ENCODE measurements at regions of chr19 and their contacts with region 1.

Region 1: GRCh38 chr19:3544742-3545668 is 6.0 kb downstream of the TEKTIP1 start:
- DNase-seq: peak; percentile 47
- H3K4me3 ChIP-seq: no peak overlapping the region
- H3K27ac ChIP-seq: no peak overlapping the region
- H3K4me1 ChIP-seq: no peaks in the 10 kb centered on the region
- H3K27me3 ChIP-seq: no peaks in the 10 kb centered on the region
- CTCF ChIP-seq: peak; percentile 90 to 99
- POLR2A ChIP-seq: no peak

Region 2: GRCh38 chr19:3108775-3109174 is 436.2 kb before region 1 on chr19:
- CTCF ChIA-PET with region 1: no interaction called
- POLR2A ChIA-PET with region 1: no interaction called
- dilution Hi-C with region 1: no loop called
- intact Hi-C with region 1: no loop called
- DNase-seq: peak; percentile 62
- H3K4me3 ChIP-seq: no peak overlapping the region
- H3K27ac ChIP-seq: no peak overlapping the region
- H3K4me1 ChIP-seq: no peaks in the 10 kb centered on the region
- H3K27me3 ChIP-seq: no peaks in the 10 kb centered on the region
- CTCF ChIP-seq: peak; percentile 85 to 93
- POLR2A ChIP-seq: no peak

Region 3: DNA sequence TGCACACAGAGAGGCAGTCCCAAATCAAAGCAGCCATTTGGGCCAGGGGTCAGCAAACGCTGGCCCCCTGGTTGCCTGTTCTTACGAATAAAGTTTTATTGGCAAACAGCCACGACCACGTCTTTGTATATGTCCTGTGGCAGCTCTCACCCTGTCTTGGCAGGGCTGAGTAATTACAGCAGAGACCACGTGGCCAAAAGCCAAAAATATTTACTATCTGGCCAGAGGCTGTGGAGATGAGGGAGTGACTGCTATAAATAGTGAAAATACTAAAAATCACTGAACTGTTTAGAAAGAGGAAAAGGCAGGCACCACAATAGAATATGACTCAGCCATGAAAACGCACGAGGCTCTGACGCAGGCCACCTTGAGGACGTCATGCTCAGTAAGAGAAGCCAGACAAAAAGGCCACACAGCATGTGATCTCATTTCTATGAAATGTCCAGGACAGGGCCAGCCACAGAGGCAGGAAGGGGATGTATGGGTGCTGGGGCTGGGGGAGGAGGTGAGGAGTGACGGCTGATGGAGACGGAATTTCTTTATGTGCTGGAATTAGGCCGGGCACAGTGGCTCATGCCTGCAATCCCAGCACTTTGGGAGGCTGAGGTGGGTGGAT is 94.1 kb before region 1 on chr19:
- CTCF ChIA-PET with region 1: no interaction called
- POLR2A ChIA-PET with region 1: no interaction called
- dilution Hi-C with region 1: no loop called
- intact Hi-C with region 1: no loop called
- DNase-seq: peak; percentile 99
- H3K4me3 ChIP-seq: no peak overlapping the region
- H3K27ac ChIP-seq: peak overlapping the region; percentile 94
- H3K4me1 ChIP-seq: peaks cover 11% of the 10 kb centered on the region
- H3K27me3 ChIP-seq: no peaks in the 10 kb centered on the region
- CTCF ChIP-seq: no peak
- POLR2A ChIP-seq: no peak

Region 4: GRCh38 chr19:3500429-3501130 is 44.4 kb before region 1 on chr19 and contains the start of gene DOHH:
- CTCF ChIA-PET with region 1: no interaction called
- POLR2A ChIA-PET with region 1: no interaction called
- dilution Hi-C with region 1: no loop called
- intact Hi-C with region 1: no loop called
- DNase-seq: peak; percentile 98
- H3K4me3 ChIP-seq: peak within 1 kb of the TSS; percentile 73 to 87 (median 80)
- H3K27ac ChIP-seq: peak within 1 kb of the TSS; percentile 87
- H3K4me1 ChIP-seq: peaks cover 9% of the 10 kb centered on the region
- H3K27me3 ChIP-seq: no peaks in the 10 kb centered on the region
- CTCF ChIP-seq: no peak
- POLR2A ChIP-seq: peak; percentile 92
- total RNA-seq, gene DOHH: 14.8 and 15.2 TPM in 2 replicates

Region 5: DNA sequence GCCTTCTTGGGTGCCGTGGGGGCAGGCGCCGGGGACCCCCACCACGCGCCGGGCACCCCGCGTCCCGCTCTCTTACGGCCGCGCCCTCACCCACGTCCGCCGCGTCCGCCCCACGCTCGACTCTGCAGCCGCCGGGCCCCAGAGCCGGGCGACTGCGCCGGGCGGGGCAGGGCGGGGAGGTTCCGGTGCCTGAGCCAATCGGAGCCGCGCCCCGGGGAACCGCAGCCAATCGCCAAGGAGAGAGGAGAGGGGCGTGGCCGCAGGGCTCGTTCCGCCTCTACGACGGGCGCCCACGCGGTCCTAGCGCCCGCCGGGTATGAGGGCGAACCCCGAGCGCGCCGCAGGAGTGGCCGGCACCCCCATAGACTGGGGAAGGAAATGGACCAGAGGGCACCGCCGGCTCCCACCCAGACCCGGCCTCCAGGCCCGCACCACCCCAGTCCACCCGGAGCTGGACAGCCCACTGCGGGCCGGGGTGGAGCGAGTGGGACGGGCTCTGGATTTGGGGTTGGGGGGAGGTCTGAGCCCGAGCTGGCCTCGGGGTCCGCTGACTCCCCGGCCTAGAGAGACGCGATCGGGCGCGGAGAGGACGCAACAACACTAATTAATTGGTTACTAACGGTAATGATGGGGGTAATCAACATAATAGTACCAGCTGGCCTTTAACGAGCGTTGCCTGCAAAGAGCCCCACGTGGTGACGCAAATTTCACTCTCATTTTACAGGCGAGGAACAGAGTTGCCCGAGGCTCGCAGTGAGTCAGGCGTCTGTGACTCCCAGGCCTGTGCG is 12.7 kb after region 1 on chr19 and contains the start of gene MFSD12:
- CTCF ChIA-PET with region 1: interaction called, 34 read pairs
- POLR2A ChIA-PET with region 1: interaction called, 5 read pairs
- dilution Hi-C with region 1: no loop called
- intact Hi-C with region 1: no loop called
- DNase-seq: peak; percentile 91
- H3K4me3 ChIP-seq: peak within 1 kb of the TSS; percentile 49 to 63 (median 58)
- H3K27ac ChIP-seq: peak within 1 kb of the TSS; percentile 21
- H3K4me1 ChIP-seq: peaks cover 24% of the 10 kb centered on the region
- H3K27me3 ChIP-seq: no peaks in the 10 kb centered on the region
- CTCF ChIP-seq: no peak
- POLR2A ChIP-seq: peak; percentile 68
- total RNA-seq, gene MFSD12: 78.9 and 80.4 TPM in 2 replicates

Region 6: GRCh38 chr19:3572132-3572854 is 27.3 kb after region 1 on chr19:
- CTCF ChIA-PET with region 1: interaction called, 27 read pairs
- POLR2A ChIA-PET with region 1: no interaction called
- dilution Hi-C with region 1: no loop called
- intact Hi-C with region 1: no loop called
- DNase-seq: peak; percentile 100
- H3K4me3 ChIP-seq: peak overlapping the region; percentile 26 to 33 (median 31)
- H3K27ac ChIP-seq: peak overlapping the region; percentile 30
- H3K4me1 ChIP-seq: peaks cover 15% of the 10 kb centered on the region
- H3K27me3 ChIP-seq: no peaks in the 10 kb centered on the region
- CTCF ChIP-seq: no peak
- POLR2A ChIP-seq: no peak

Region 7: GRCh38 chr19:3606690-3607289 is 61.8 kb after region 1 on chr19 and contains the start of gene TBXA2R:
- CTCF ChIA-PET with region 1: interaction called, 10 read pairs
- POLR2A ChIA-PET with region 1: no interaction called
- dilution Hi-C with region 1: no loop called
- intact Hi-C with region 1: no loop called
- DNase-seq: peak; percentile 69
- H3K4me3 ChIP-seq: peak within 1 kb of the TSS; percentile 39 to 48 (median 39)
- H3K27ac ChIP-seq: peak within 1 kb of the TSS; percentile 34
- H3K4me1 ChIP-seq: peaks cover 23% of the 10 kb centered on the region
- H3K27me3 ChIP-seq: no peaks in the 10 kb centered on the region
- CTCF ChIP-seq: no peak
- POLR2A ChIP-seq: peak; percentile 17
- total RNA-seq, gene TBXA2R: 2.9 and 3.4 TPM in 2 replicates

Region 8: GRCh38 chr19:3700221-3701032 is 155.4 kb after region 1 on chr19 and contains the start of gene PIP5K1C:
- CTCF ChIA-PET with region 1: interaction called, 23 read pairs
- POLR2A ChIA-PET with region 1: no interaction called
- dilution Hi-C with region 1: no loop called
- intact Hi-C with region 1: loop called (anchors 1 kb)
- DNase-seq: peak; percentile 84
- H3K4me3 ChIP-seq: peak within 1 kb of the TSS; percentile 63 to 89 (median 81)
- H3K27ac ChIP-seq: peak within 1 kb of the TSS; percentile 70
- H3K4me1 ChIP-seq: peaks cover 8% of the 10 kb centered on the region
- H3K27me3 ChIP-seq: no peaks in the 10 kb centered on the region
- CTCF ChIP-seq: peak; percentile 73 to 80
- POLR2A ChIP-seq: peak; percentile 65
- total RNA-seq, gene PIP5K1C: 79.5 and 82.2 TPM in 2 replicates